Naive thymus-derived CD4-positive, alpha-beta T cell (primary cell): ENCODE measurements at regions of chr1 and their contacts with region 1.

Region 1: DNA sequence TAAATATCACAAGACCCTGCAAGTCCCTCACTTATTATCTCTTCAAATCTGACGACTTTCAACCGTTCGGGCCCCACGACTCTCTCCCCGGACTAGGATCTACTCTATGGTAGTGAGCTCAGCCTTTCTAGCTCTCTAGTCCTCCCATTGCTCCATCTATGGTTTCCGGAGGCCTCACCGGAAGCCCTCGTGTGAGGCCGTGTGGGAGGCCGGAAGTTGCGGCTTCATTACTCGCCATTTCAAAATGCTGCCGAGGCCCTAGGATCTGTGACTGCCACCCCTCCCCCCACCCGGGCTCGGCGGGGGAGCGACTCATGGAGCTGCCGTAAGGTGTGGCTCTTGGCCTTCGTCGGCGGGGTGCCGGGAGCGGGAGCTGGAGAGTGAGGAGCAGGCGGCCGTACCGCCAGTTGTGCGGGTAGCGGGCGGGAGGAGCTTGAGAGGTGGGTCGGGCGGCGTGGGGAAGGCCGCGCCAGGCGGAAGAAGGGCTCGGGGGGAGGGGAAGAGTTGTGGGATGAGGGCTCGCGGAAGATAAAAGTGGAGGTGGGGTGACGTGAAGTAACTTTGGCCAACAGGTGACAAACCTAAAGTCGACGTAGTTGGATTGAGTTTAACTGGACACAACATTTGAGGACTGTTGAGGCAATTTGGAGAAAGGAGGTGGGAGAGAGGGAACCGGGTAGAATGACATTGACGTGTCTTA is at the start of gene MDM4:
- DNase-seq: peak; percentile 86 to 94 (median 93)
- ATAC-seq: peak; percentile 87
- H3K4me3 ChIP-seq: peak within 1 kb of the TSS; percentile 91
- H3K4me3 Mint-ChIP-seq: peak within 1 kb of the TSS in 1 of 10 donors; percentile 87
- H3K27ac ChIP-seq: peak within 1 kb of the TSS; percentile 95
- H3K27ac Mint-ChIP-seq: peak within 1 kb of the TSS in 6 of 9 donors; percentile 68 to 98 (median 80)
- H3K4me1 ChIP-seq: peaks cover 64 to 67% of the 10 kb centered on the region in 2 donors
- H3K4me1 Mint-ChIP-seq: peaks cover 32 to 78% (median 66%) of the 10 kb centered on the region in 7 donors
- H3K27me3 ChIP-seq: no peaks in the 10 kb centered on the region
- H3K27me3 Mint-ChIP-seq: no peaks in the 10 kb centered on the region
- total RNA-seq, gene MDM4: 107 to 278 (median 268) TPM

Region 2: DNA sequence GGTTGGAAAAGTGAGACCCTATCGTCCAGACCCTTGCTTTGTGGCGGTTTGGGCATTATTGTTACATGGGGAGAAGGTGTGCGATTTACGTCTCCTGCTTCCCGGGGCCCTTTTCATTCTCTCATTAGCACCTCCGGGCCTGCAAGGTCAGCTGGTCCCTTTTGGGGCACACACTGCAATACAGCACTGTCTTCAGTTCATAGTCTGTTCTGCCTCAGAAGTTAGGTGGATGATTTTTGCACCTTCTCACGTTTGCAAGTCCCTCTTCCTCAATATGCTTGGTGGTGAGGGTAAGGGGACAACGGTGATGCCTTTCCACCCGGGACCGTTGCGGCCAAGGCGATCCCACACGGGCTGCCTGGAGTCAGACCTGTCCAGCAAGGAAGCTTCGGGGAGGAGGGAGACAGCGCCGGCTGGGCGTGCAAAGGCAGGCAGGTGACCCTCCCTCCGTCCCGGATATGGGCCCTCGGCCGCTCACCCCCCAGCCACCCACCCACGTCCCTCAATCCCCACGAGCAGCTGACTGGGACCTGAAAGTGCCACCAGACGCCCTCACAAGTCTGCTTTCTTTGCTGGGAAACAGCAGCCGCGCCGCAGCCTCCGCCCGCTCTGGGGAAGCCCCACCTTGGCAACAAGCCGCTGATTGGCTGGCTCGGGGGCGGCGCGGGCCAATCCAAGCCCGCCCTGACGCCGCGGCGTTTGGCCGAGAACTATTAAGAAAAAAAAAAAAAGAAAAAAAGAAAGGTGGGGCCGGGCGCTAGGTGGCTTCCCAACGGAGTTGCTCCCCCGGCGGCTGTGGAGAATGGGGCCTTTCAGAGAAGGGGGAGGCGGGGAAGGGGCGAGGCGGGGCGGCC is 1189.3 kb before region 1 on chr1:
- CTCF ChIA-PET with region 1: interaction called, 3 read pairs
- POLR2A ChIA-PET with region 1: no interaction called
- intact Hi-C with region 1: loop called in 1 of 2 experiments (anchors 10 kb)
- DNase-seq: peak; percentile 90 to 96 (median 94)
- ATAC-seq: peak; percentile 84
- H3K4me3 ChIP-seq: peak overlapping the region; percentile 72
- H3K4me3 Mint-ChIP-seq: peak overlapping the region; percentile 80 to 89 (median 86)
- H3K27ac ChIP-seq: peak overlapping the region; percentile 98
- H3K27ac Mint-ChIP-seq: peak overlapping the region; percentile 90 to 100 (median 99)
- H3K4me1 ChIP-seq: peaks cover 55 to 56% of the 10 kb centered on the region in 2 donors
- H3K4me1 Mint-ChIP-seq: peaks cover 40 to 73% (median 70%) of the 10 kb centered on the region in 7 donors
- H3K27me3 ChIP-seq: no peaks in the 10 kb centered on the region
- H3K27me3 Mint-ChIP-seq: no peaks in the 10 kb centered on the region

Region 3: GRCh38 chr1:204411451-204412204 is 104.7 kb before region 1 on chr1 and contains the start of gene PPP1R15B:
- CTCF ChIA-PET with region 1: interaction called, 3 read pairs
- POLR2A ChIA-PET with region 1: interaction called, 5 read pairs
- intact Hi-C with region 1: loop called (anchors 1 kb)
- DNase-seq: peak; percentile 92 to 99 (median 98)
- ATAC-seq: peak; percentile 91
- H3K4me3 ChIP-seq: peak within 1 kb of the TSS; percentile 99
- H3K4me3 Mint-ChIP-seq: peak within 1 kb of the TSS; percentile 92 to 99 (median 97)
- H3K27ac ChIP-seq: peak within 1 kb of the TSS; percentile 100
- H3K27ac Mint-ChIP-seq: peak within 1 kb of the TSS; percentile 97 to 100 (median 99)
- H3K4me1 ChIP-seq: peaks cover 0 to 5% of the 10 kb centered on the region in 2 donors
- H3K4me1 Mint-ChIP-seq: peaks cover 8 to 23% (median 14%) of the 10 kb centered on the region in 7 donors
- H3K27me3 ChIP-seq: no peaks in the 10 kb centered on the region
- H3K27me3 Mint-ChIP-seq: no peaks in the 10 kb centered on the region
- total RNA-seq, gene PPP1R15B: 69.5 to 175 (median 73.0) TPM

Region 4: DNA sequence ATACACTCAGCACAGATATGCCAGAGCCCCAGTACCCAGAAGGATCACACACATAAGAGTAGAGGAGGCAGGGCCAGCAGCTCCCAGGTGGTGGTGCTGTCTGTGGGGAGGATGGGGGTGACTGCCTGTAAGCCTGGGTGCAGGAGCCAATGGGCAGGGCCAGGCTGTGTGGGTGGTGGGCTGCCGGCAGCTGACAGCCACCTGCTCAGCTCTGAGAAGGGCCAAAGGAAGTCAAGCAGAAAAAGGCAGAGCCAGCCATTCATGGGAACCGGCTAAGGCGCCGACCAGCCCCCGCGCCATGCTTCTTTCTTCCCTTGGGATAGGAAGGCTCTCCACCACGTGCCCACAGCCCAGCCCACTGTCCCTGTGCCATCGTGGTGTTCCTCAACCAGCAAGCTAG is 35.8 kb before region 1 on chr1:
- CTCF ChIA-PET with region 1: no interaction called
- POLR2A ChIA-PET with region 1: no interaction called
- intact Hi-C with region 1: no loop called
- DNase-seq: no peak
- ATAC-seq: peak; percentile 26
- H3K4me3 ChIP-seq: no peak overlapping the region
- H3K4me3 Mint-ChIP-seq: peak overlapping the region in 7 of 10 donors; percentile 5 to 69 (median 61)
- H3K27ac ChIP-seq: no peak overlapping the region
- H3K27ac Mint-ChIP-seq: peak overlapping the region in 6 of 9 donors; percentile 43 to 84 (median 74)
- H3K4me1 ChIP-seq: peaks cover 13 to 44% of the 10 kb centered on the region in 2 donors
- H3K4me1 Mint-ChIP-seq: peaks cover 40 to 89% (median 80%) of the 10 kb centered on the region in 7 donors
- H3K27me3 ChIP-seq: no peaks in the 10 kb centered on the region
- H3K27me3 Mint-ChIP-seq: no peaks in the 10 kb centered on the region

Region 5: DNA sequence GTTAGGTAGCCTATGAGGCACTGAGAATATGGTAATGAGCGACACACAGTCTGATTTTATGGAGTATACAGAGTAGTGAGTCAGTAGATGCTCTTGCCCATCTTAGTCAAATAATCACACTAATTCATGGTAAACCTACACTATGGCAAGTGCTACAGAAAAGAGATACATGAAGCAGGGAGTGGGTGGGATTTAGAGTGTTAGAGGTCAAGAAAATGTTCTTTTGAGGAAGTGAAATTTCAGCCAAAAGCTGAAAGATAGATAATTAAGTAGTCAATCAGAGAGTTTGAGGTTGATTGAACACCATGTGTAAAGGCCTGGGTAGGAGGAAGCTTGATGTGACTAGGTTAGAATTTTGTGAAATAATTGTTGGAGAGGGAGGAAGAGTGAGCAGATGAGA is 14.6 kb after region 1 on chr1:
- CTCF ChIA-PET with region 1: interaction called, 3 read pairs
- POLR2A ChIA-PET with region 1: interaction called, 84 read pairs
- intact Hi-C with region 1: loop called in 1 of 2 experiments (anchors 1 kb)
- DNase-seq: no peak
- ATAC-seq: no peak
- H3K4me3 ChIP-seq: no peak overlapping the region
- H3K4me3 Mint-ChIP-seq: no peak overlapping the region
- H3K27ac ChIP-seq: peak overlapping the region; percentile 15
- H3K27ac Mint-ChIP-seq: peak overlapping the region in 7 of 9 donors; percentile 1 to 67 (median 27)
- H3K4me1 ChIP-seq: peaks cover 0 to 9% of the 10 kb centered on the region in 2 donors
- H3K4me1 Mint-ChIP-seq: peaks cover 14 to 56% (median 29%) of the 10 kb centered on the region in 7 donors
- H3K27me3 ChIP-seq: no peaks in the 10 kb centered on the region
- H3K27me3 Mint-ChIP-seq: no peaks in the 10 kb centered on the region

Region 6: DNA sequence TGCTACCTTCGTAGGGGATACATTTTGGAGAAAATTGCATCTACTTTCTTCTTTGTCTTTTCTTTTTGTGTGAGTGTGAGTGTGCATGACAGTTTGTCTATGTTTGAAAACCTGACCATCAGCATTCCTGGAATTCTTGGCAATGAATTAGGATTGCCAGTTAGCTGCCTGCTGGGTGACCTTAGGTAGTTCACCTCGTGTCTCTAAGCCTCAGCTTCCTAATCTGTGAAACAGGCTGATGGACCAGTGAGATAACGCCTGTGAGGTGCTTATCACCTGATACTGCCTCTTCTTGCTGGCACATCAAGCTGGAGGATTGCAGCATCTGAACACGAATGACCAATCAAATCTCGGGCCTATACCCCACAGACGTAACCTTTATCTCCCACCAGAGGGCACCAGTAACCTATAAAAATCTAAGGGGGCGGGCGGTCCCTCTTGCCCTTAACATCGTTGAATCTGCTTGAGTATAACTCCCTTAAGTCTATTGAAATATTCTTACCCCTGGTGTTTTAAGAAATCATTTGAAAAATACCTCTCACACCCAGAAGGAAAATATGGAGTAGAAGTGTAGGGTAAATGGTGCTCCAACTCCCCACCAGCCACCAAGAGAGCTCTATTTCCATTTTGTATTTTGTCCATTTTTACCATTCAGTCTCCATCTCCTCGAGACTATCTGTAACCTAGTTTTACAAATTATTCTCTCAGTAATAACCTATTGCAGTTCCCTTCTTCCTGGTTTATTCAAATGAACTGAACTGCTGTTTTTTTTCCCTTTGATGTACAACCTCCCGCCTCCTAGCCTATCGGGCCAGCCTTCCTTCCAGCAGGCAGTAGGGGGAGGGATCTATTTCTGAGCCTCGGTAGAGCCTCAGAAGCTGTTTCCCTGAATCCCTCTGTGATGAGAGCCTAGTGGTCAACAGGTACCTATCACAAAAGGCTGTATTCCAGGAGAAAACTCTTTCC is 49.6 kb after region 1 on chr1:
- CTCF ChIA-PET with region 1: interaction called, 5 read pairs
- POLR2A ChIA-PET with region 1: interaction called, 6 read pairs
- intact Hi-C with region 1: loop called (anchors 1 to 2 kb)
- DNase-seq: peak in 8 of 9 donors; percentile 47 to 80 (median 68)
- ATAC-seq: peak; percentile 92
- H3K4me3 ChIP-seq: no peak overlapping the region
- H3K4me3 Mint-ChIP-seq: peak overlapping the region in 5 of 10 donors; percentile 3 to 51 (median 15)
- H3K27ac ChIP-seq: no peak overlapping the region
- H3K27ac Mint-ChIP-seq: peak overlapping the region; percentile 58 to 84 (median 74)
- H3K4me1 ChIP-seq: peaks cover 14 to 37% of the 10 kb centered on the region in 2 donors
- H3K4me1 Mint-ChIP-seq: peaks cover 22 to 62% (median 55%) of the 10 kb centered on the region in 7 donors
- H3K27me3 ChIP-seq: no peaks in the 10 kb centered on the region
- H3K27me3 Mint-ChIP-seq: no peaks in the 10 kb centered on the region

Region 7: GRCh38 chr1:205211169-205211838 is 695.0 kb after region 1 on chr1 and contains the start of gene DSTYK:
- CTCF ChIA-PET with region 1: no interaction called
- POLR2A ChIA-PET with region 1: no interaction called
- intact Hi-C with region 1: loop called in 1 of 2 experiments (anchors 10 kb)
- DNase-seq: peak; percentile 77 to 95 (median 93)
- ATAC-seq: peak; percentile 95
- H3K4me3 ChIP-seq: peak within 1 kb of the TSS; percentile 75
- H3K4me3 Mint-ChIP-seq: peak within 1 kb of the TSS; percentile 89 to 98 (median 96)
- H3K27ac ChIP-seq: peak within 1 kb of the TSS; percentile 87
- H3K27ac Mint-ChIP-seq: peak within 1 kb of the TSS; percentile 95 to 99 (median 98)
- H3K4me1 ChIP-seq: peaks cover 8% of the 10 kb centered on the region in 2 donors
- H3K4me1 Mint-ChIP-seq: peaks cover 12 to 66% (median 54%) of the 10 kb centered on the region in 7 donors
- H3K27me3 ChIP-seq: no peaks in the 10 kb centered on the region
- H3K27me3 Mint-ChIP-seq: peaks cover 0 to 4% (median 0%) of the 10 kb centered on the region in 5 donors
- total RNA-seq, gene DSTYK: 11.3 to 18.5 (median 15.2) TPM